ENCODE measurements at regions of chr11 and their contacts with region 1.

Region 1: DNA sequence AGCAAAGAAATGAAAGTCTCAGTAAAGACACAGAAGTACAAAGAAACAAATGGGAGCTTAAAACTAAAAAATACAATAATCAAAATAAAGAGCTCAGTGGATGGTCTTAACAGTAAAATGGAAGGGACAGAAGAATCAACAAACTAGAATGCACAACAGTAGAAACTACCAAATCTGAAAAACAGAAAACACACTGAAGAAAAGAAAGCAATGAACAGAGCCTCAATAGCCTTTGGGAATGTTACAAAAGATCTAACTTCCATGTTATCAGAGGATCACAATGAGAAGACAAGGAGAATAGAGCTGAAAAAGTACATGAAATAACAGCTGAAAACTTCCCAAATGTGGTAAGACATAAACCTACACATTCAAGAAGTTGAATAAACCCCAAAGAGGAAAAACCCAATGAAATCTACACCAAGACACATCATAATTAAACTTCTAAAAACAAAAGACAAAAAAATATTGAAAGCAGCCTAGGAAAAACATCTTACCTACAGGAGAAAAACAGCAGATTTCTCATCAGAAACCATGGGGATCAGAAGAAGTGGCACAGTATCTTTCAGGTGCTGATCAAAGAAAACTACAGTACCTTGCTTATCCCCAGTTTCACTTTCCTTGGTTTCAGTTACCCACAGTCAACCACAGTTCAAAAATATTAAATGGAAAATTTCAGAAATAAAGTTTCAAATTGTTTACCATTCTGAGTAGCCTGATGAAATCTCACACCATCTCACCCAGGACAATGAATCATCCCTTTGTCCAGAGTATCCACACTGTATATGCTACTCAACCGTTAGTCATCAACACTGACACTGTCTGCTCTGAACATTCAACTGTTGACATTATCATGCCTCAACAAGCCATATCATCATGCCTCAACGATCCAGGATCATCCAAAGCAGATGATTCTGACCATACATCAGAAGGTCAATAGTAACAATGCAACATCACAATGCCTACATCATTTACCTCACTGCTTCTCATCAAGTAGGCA is 22.2 kb downstream of the RRAS2 start:
- DNase-seq: no peak
- H3K4me3 Mint-ChIP-seq: no peak overlapping the region
- H3K27ac Mint-ChIP-seq: peak overlapping the region; percentile 80
- H3K4me1 Mint-ChIP-seq: peaks cover 47% of the 10 kb centered on the region
- H3K27me3 Mint-ChIP-seq: no peaks in the 10 kb centered on the region

Region 2: GRCh38 chr11:13868710-13869397 is 468.0 kb before region 1 on chr11:
- intact Hi-C with region 1: loop called (anchors 2 kb)
- DNase-seq: peak; percentile 22
- H3K4me3 Mint-ChIP-seq: peak overlapping the region; percentile 31
- H3K27ac Mint-ChIP-seq: peak overlapping the region; percentile 86
- H3K4me1 Mint-ChIP-seq: peaks cover 34% of the 10 kb centered on the region
- H3K27me3 Mint-ChIP-seq: peaks cover 10% of the 10 kb centered on the region

Region 3: GRCh38 chr11:14148653-14149273 is 188.0 kb before region 1 on chr11:
- intact Hi-C with region 1: no loop called
- DNase-seq: no peak
- H3K4me3 Mint-ChIP-seq: no peak overlapping the region
- H3K27ac Mint-ChIP-seq: no peak overlapping the region
- H3K4me1 Mint-ChIP-seq: peaks cover 7% of the 10 kb centered on the region
- H3K27me3 Mint-ChIP-seq: peaks cover 12% of the 10 kb centered on the region

Region 4: GRCh38 chr11:14320020-14320419 is 16.8 kb before region 1 on chr11:
- intact Hi-C with region 1: loop called (anchors 2 kb)
- DNase-seq: peak; percentile 18
- H3K4me3 Mint-ChIP-seq: no peak overlapping the region
- H3K27ac Mint-ChIP-seq: peak overlapping the region; percentile 38
- H3K4me1 Mint-ChIP-seq: peaks cover 46% of the 10 kb centered on the region
- H3K27me3 Mint-ChIP-seq: no peaks in the 10 kb centered on the region

Region 5: DNA sequence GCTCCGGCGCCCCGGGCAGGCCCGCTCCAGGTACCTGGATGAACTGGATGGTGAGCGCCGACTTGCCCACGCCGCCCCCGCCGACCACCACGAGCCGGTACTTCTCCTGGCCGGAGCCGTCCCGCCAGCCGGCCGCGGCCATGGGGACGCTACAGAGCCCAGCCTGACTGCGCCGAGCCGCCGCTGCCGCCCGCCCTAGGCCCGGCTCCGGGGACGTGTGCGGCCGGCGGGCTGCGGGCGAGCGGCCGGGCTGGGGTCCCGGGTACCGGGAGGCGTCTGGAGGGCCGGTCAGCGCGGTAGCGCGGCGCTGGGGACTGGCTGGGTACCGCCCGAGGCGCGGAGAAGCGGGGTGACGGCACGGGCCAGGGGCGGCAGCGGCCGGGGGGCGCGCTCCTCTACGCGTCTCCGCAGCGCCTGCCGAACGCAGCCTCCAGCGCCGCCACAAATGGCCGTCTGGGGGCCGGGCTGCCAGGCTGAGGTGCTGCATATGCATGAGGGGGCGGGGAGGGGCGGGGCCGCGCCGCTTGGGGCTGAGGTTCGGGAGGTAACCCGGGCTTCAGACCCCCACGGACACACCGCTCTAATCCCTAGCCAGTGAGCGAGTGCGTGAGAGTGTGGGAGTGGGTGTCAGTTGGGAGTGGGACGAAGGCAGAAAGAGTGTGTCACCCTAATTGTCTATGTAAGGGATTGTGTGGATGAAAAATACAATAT is 22.1 kb after region 1 on chr11 and contains the start of gene RRAS2:
- intact Hi-C with region 1: loop called (anchors 1 kb)
- DNase-seq: peak; percentile 74
- H3K4me3 Mint-ChIP-seq: peak within 1 kb of the TSS; percentile 95
- H3K27ac Mint-ChIP-seq: peak within 1 kb of the TSS; percentile 94
- H3K4me1 Mint-ChIP-seq: peaks cover 42% of the 10 kb centered on the region
- H3K27me3 Mint-ChIP-seq: peaks cover 14% of the 10 kb centered on the region
- total RNA-seq, gene RRAS2: 64.4 and 65.2 TPM in 2 replicates

Region 6: GRCh38 chr11:14373931-14374646 is 37.3 kb after region 1 on chr11:
- intact Hi-C with region 1: loop called (anchors 1 kb)
- DNase-seq: no peak
- H3K4me3 Mint-ChIP-seq: no peak overlapping the region
- H3K27ac Mint-ChIP-seq: peak overlapping the region; percentile 78
- H3K4me1 Mint-ChIP-seq: peaks cover 63% of the 10 kb centered on the region
- H3K27me3 Mint-ChIP-seq: peaks cover 5% of the 10 kb centered on the region

Measured in activated T-helper 2 cell treated with anti-CD3 and anti-CD28 coated beads, Interferon-gamma antibody, Interleukin-2, Interleukin-4, amounts not matched to agents 10 μg/mL and 5 μg/mL and 100 μg/mL, durations not matched to agents 14 hours and 24 hours and 36 hours (primary cell).